ENCODE measurements at regions of chr18 and their contacts with region 1.

Region 1: GRCh38 chr18:26548429-26549262 is at the start of gene KCTD1:
- DNase-seq: peak; percentile 78 to 86 (median 80)
- H3K4me3 ChIP-seq: peak within 1 kb of the TSS; percentile 54
- H3K27ac ChIP-seq: peak within 1 kb of the TSS; percentile 66 to 71
- H3K4me1 ChIP-seq: peaks cover 18% of the 10 kb centered on the region
- H3K27me3 ChIP-seq: no peaks in the 10 kb centered on the region
- CTCF ChIP-seq: no peak
- EP300 ChIP-seq: no peak
- POLR2A ChIP-seq: no peak
- total RNA-seq, gene KCTD1: 10.7 to 30.8 (median 22.5) TPM

Region 2: GRCh38 chr18:26383454-26384270 is 165.0 kb before region 1 on chr18:
- intact Hi-C with region 1: loop called in 1 of 4 experiments (anchors 10 kb)
- DNase-seq: no peak
- H3K4me3 ChIP-seq: no peak overlapping the region
- H3K27ac ChIP-seq: no peak overlapping the region
- H3K4me1 ChIP-seq: peaks cover 2% of the 10 kb centered on the region
- H3K27me3 ChIP-seq: no peaks in the 10 kb centered on the region
- CTCF ChIP-seq: peak; percentile 31 to 73 (median 70)
- EP300 ChIP-seq: no peak
- POLR2A ChIP-seq: no peak

Region 3: DNA sequence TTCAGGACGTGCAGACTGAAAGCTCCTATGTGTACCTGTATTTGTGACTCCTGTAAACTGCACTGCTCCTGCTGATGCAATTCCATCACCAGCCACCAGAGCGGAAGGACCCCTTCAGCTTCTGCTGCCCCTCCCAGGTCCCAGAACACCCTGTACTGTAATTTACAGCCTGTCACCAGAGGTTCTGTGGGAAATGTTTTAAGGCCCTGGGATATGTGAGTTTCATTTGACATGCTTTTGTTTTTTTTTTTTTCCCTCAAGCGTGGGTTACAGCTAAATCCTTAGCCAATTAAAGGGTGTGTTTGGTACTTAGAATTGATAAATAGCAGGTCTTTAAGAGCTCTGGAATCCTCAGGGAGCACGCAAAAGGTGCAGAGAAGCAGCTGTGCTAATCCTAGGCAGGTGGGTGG is 79.7 kb before region 1 on chr18:
- intact Hi-C with region 1: loop called in 2 of 4 experiments (anchors 10 kb)
- DNase-seq: no peak
- H3K4me3 ChIP-seq: no peak overlapping the region
- H3K27ac ChIP-seq: no peak overlapping the region
- H3K4me1 ChIP-seq: no peaks in the 10 kb centered on the region
- H3K27me3 ChIP-seq: no peaks in the 10 kb centered on the region
- CTCF ChIP-seq: no peak
- EP300 ChIP-seq: no peak
- POLR2A ChIP-seq: no peak

Region 4: GRCh38 chr18:26637324-26637723 is 88.7 kb after region 1 on chr18:
- intact Hi-C with region 1: loop called in 1 of 4 experiments (anchors 10 kb)
- DNase-seq: no peak
- H3K4me3 ChIP-seq: no peak overlapping the region
- H3K27ac ChIP-seq: no peak overlapping the region
- H3K4me1 ChIP-seq: peaks cover 1% of the 10 kb centered on the region
- H3K27me3 ChIP-seq: no peaks in the 10 kb centered on the region
- CTCF ChIP-seq: no peak
- EP300 ChIP-seq: no peak
- POLR2A ChIP-seq: no peak

Region 5: DNA sequence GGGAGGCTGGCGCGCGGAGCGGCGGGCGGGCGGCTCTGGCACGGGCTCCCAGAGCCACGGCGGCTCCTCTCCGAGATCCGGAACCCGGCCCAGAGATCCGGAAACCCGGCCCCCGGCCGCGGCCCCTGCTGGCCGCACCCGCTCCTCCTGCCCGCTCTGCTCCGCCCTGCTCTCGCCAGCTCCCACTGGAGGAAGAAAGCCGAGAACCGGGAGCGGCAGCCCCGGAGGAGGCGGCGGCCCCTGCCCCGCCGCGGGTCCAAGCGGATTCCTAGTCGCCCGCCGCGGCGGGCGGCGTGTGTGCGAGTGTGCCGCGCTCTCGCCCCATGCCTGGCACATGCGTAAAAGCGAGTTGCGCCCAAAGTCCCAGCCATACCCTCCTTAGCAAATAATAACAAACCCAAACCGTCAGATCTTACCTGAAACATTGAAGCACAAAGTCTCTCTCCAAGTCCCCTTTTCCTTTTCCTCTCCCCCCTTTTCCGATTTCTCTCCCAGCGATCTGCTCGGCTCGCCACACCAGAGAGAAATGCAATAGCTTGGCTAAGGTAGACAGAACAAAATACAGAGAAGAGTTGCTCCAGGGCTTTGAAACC is 108.4 kb after region 1 on chr18:
- intact Hi-C with region 1: loop called in 2 of 4 experiments (anchors 10 kb)
- DNase-seq: peak; percentile 75 to 88 (median 83)
- H3K4me3 ChIP-seq: peak overlapping the region; percentile 77
- H3K27ac ChIP-seq: peak overlapping the region; percentile 93 to 99
- H3K4me1 ChIP-seq: peaks cover 3% of the 10 kb centered on the region
- H3K27me3 ChIP-seq: no peaks in the 10 kb centered on the region
- CTCF ChIP-seq: peak in 1 of 3 donors; percentile 28
- EP300 ChIP-seq: no peak
- POLR2A ChIP-seq: no peak